ENCODE measurements at regions of chr3 and their contacts with region 1.

Region 1: DNA sequence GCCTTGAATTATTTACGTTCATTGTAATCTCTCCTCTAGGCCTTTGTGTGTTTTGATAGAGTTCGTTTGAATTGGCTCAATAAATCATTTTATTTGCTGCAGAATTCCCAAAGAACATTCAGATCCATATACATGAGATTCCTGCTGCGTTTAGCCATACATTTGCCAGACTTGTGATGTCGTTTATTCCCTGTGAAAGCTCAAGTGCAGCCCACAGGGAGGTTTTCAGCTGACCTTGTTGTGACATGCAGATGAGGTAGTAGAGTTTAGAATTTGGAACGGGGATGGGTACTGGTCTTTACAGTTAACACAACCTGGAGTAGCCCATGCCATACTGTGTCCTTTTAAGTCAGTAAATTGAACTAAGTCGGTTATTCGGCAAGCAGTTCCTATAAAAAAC is at the start of gene C3orf20:
- DNase-seq: no peak
- total RNA-seq, gene C3orf20: 0.32 TPM

Region 2: GRCh38 chr3:14532691-14533456 is 142.0 kb before region 1 on chr3:
- intact Hi-C with region 1: no loop called
- DNase-seq: no peak

Region 3: GRCh38 chr3:14780927-14781507 is 106.2 kb after region 1 on chr3:
- intact Hi-C with region 1: loop called (anchors 2 kb)
- DNase-seq: peak; percentile 76